AG04450 (cell line): ENCODE measurements at regions of chr4 and their contacts with region 1.

Region 1: GRCh38 chr4:173013232-173013930 is 155.2 kb upstream of the GALNT7 start:
- DNase-seq: no peak
- H3K4me3 ChIP-seq: no peak overlapping the region
- H3K27ac ChIP-seq: no peak overlapping the region
- H3K27me3 ChIP-seq: no peaks in the 10 kb centered on the region
- CTCF ChIP-seq: peak; percentile 67

Region 2: DNA sequence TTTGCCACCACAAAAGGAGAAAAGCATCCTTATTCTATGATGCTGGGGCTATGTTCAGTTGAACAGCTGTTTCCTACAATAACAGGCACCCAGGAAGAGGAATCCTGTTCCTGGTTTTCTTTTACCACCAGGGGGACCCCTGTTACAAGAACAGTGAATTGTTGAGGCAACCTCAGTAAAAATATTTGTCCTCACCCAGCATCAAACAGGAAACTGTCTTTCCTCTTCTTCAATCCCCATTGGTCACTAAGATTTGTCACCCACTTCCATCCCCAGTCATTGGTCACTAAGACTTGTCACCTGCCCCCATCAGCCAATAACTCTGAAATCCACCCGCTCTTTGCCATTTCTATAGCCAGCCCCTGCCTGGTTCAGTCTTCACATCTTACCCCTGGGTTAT is 11.8 kb after region 1 on chr4:
- CTCF ChIA-PET with region 1: interaction called, 84 read pairs
- POLR2A ChIA-PET with region 1: no interaction called
- DNase-seq: peak; percentile 65
- H3K4me3 ChIP-seq: no peak overlapping the region
- H3K27ac ChIP-seq: no peak overlapping the region
- H3K27me3 ChIP-seq: peaks cover 7% of the 10 kb centered on the region
- CTCF ChIP-seq: peak; percentile 79

Region 3: DNA sequence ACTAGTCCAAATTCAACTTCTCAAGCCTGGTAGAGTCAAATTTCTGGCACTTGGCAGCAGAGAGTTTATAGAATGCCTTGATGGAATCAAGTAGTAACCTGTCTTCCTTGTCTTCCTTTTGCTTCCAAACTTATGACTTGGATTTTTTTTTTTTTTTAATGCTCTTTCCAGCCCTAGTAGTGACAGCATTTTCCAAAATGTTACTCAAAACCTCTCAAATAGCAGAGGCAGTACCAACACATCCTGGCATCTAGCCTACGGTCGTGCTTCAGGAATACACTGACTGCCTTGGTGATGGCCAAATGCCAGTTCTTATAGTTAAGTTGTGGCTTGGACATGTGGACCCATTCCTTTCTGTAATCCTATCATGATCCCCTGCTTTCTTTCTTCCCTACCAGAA is 201.3 kb after region 1 on chr4:
- CTCF ChIA-PET with region 1: interaction called, 11 read pairs
- POLR2A ChIA-PET with region 1: no interaction called
- DNase-seq: no peak
- H3K4me3 ChIP-seq: no peak overlapping the region
- H3K27ac ChIP-seq: no peak overlapping the region
- H3K27me3 ChIP-seq: no peaks in the 10 kb centered on the region
- CTCF ChIP-seq: no peak

Region 4: DNA sequence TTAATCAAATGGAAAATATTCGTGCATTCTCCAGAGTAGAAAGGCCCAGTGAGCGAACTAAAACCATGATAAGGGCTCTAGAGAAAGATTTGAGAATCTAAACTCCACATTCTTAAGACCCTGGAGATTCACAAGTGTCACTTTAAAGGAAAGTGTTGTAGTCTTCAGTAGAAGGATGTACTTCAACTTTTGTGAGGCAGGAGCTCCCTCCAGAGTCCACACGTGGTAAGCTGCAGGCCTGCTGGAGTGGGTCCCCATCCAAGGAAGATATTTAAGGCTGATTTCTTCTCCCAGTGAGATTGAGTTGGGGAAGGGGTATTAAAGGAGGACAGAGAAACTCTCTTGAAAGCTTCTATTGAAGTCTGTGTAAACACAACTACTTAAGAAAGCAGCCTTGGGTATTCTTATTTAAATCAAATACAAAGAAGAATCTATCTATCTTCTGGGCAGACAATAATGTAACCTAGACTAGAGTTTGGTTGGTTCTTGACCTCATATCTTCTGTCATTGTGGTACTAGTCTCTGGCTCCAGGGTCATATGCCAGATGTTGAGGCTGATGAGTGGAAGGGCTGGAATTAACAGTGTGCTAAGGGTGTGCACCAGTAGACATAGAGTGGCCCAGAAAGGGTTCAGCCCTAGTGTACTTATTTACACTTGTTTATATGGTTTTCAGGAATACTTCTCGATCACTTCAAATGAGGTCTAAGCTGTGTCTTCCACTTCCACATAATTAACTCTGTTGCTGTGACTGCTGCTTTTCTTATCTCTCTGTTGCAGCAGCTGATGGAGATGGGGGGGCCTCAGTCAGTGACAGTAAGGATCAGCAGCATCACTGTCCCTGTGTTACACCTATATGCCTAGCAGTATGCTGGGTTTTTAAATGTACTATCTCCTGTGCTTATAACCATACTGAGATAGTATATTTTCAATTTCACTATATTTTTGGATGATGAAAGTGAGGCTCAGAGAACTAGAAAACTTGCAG is 244.6 kb after region 1 on chr4:
- CTCF ChIA-PET with region 1: interaction called, 334 read pairs
- POLR2A ChIA-PET with region 1: no interaction called
- DNase-seq: peak; percentile 44
- H3K4me3 ChIP-seq: no peak overlapping the region
- H3K27ac ChIP-seq: no peak overlapping the region
- H3K27me3 ChIP-seq: no peaks in the 10 kb centered on the region
- CTCF ChIP-seq: peak; percentile 91

Region 5: GRCh38 chr4:173293663-173294062 is 280.3 kb after region 1 on chr4:
- CTCF ChIA-PET with region 1: interaction called, 172 read pairs
- POLR2A ChIA-PET with region 1: interaction called, 5 read pairs
- DNase-seq: no peak
- H3K4me3 ChIP-seq: no peak overlapping the region
- H3K27ac ChIP-seq: no peak overlapping the region
- H3K27me3 ChIP-seq: no peaks in the 10 kb centered on the region
- CTCF ChIP-seq: no peak

Region 6: GRCh38 chr4:173380987-173381386 is 367.6 kb after region 1 on chr4:
- CTCF ChIA-PET with region 1: interaction called, 12 read pairs
- POLR2A ChIA-PET with region 1: no interaction called
- DNase-seq: no peak
- H3K4me3 ChIP-seq: no peak overlapping the region
- H3K27ac ChIP-seq: no peak overlapping the region
- H3K27me3 ChIP-seq: no peaks in the 10 kb centered on the region
- CTCF ChIP-seq: no peak